Activated CD4-positive, alpha-beta memory T cell treated with anti-CD3 and anti-CD28 coated beads, Interleukin-2, amount 10 ng/mL, durations not matched to agents 7 days and 5 days (primary cell): ENCODE measurements at regions of chr20 and their contacts with region 1.

Region 1: GRCh38 chr20:5119435-5120188 is at the start of gene PCNA:
- DNase-seq: peak; percentile 98
- H3K4me3 Mint-ChIP-seq: peak within 1 kb of the TSS; percentile 86
- H3K27ac Mint-ChIP-seq: peak within 1 kb of the TSS; percentile 90
- H3K4me1 Mint-ChIP-seq: peaks cover 69% of the 10 kb centered on the region
- H3K27me3 Mint-ChIP-seq: no peaks in the 10 kb centered on the region
- total RNA-seq, gene PCNA: 413 to 415 TPM

Region 2: DNA sequence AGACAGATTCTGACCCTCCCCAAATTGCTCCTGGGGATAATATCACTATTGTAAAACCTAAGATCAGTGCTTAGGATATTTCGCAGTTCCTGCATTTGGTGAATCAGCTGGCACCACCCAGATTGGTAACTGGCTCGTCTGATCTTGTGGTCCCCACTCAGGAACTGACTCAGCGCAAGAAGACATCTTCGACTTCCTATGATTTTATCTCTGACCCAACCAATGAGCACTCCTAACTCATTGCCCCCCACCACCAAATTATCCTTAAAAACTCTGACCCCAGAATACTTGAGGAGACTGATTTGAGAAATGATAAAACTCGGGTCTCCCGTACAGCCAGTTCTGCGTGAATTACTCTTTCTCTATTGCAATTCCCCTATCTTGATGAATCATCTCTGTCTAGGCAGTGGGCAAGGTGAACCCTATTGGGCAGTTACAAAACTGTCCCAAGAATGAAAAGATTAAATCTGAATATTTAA is 453.6 kb before region 1 on chr20:
- CTCF ChIA-PET with region 1: no interaction called
- POLR2A ChIA-PET with region 1: interaction called, 10 read pairs
- DNase-seq: peak; percentile 81
- H3K4me3 Mint-ChIP-seq: peak overlapping the region; percentile 57
- H3K27ac Mint-ChIP-seq: peak overlapping the region; percentile 95
- H3K4me1 Mint-ChIP-seq: peaks cover 69% of the 10 kb centered on the region
- H3K27me3 Mint-ChIP-seq: no peaks in the 10 kb centered on the region

Region 3: GRCh38 chr20:4925842-4926530 is 193.6 kb before region 1 on chr20:
- CTCF ChIA-PET with region 1: no interaction called
- POLR2A ChIA-PET with region 1: no interaction called
- DNase-seq: no peak
- H3K4me3 Mint-ChIP-seq: no peak overlapping the region
- H3K27ac Mint-ChIP-seq: no peak overlapping the region
- H3K4me1 Mint-ChIP-seq: peaks cover 16% of the 10 kb centered on the region
- H3K27me3 Mint-ChIP-seq: no peaks in the 10 kb centered on the region

Region 4: GRCh38 chr20:4937397-4938319 is 182.0 kb before region 1 on chr20:
- CTCF ChIA-PET with region 1: no interaction called
- POLR2A ChIA-PET with region 1: no interaction called
- DNase-seq: no peak
- H3K4me3 Mint-ChIP-seq: no peak overlapping the region
- H3K27ac Mint-ChIP-seq: no peak overlapping the region
- H3K4me1 Mint-ChIP-seq: peaks cover 3% of the 10 kb centered on the region
- H3K27me3 Mint-ChIP-seq: no peaks in the 10 kb centered on the region

Region 5: GRCh38 chr20:5001174-5002076 is 118.2 kb before region 1 on chr20 and contains the start of gene SLC23A2:
- CTCF ChIA-PET with region 1: no interaction called
- POLR2A ChIA-PET with region 1: interaction called, 10 read pairs
- DNase-seq: peak; percentile 64
- H3K4me3 Mint-ChIP-seq: peak within 1 kb of the TSS; percentile 93
- H3K27ac Mint-ChIP-seq: peak within 1 kb of the TSS; percentile 76
- H3K4me1 Mint-ChIP-seq: peaks cover 26% of the 10 kb centered on the region
- H3K27me3 Mint-ChIP-seq: peaks cover 12% of the 10 kb centered on the region
- total RNA-seq, gene SLC23A2: 12.9 to 14.1 TPM

Region 6: GRCh38 chr20:5033571-5033970 is 86.0 kb before region 1 on chr20:
- CTCF ChIA-PET with region 1: no interaction called
- POLR2A ChIA-PET with region 1: no interaction called
- DNase-seq: no peak
- H3K4me3 Mint-ChIP-seq: no peak overlapping the region
- H3K27ac Mint-ChIP-seq: no peak overlapping the region
- H3K4me1 Mint-ChIP-seq: peaks cover 4% of the 10 kb centered on the region
- H3K27me3 Mint-ChIP-seq: peaks cover 2% of the 10 kb centered on the region

Region 7: DNA sequence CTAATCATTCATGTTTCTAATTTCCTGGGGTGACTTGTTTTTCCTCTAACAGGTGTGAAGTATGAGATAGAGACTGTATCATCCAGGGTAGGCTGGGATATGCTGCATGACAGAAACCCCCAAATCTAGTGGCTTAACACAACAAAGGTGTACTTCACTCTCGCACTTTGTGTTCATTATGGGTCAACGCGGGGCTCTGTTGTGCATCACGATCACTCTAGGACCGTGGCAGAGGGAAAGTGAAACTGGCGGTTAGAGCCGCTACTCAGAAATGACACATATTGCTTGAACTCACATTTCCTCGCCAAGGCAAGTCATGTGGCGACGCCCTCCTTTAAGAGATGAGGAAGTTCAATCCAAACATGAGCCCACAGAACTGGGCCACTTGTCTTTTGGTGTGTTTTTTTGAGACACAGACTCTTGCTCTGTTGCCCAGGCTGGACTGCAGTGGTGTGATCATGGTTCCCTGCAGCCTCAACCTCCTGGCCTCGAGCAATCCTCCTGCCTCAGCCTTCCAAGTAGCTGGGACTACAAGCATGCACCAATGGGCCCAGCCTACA is 41.1 kb before region 1 on chr20:
- CTCF ChIA-PET with region 1: no interaction called
- POLR2A ChIA-PET with region 1: interaction called, 35 read pairs
- DNase-seq: peak; percentile 90
- H3K4me3 Mint-ChIP-seq: peak overlapping the region; percentile 68
- H3K27ac Mint-ChIP-seq: peak overlapping the region; percentile 97
- H3K4me1 Mint-ChIP-seq: peaks cover 54% of the 10 kb centered on the region
- H3K27me3 Mint-ChIP-seq: no peaks in the 10 kb centered on the region

Region 8: DNA sequence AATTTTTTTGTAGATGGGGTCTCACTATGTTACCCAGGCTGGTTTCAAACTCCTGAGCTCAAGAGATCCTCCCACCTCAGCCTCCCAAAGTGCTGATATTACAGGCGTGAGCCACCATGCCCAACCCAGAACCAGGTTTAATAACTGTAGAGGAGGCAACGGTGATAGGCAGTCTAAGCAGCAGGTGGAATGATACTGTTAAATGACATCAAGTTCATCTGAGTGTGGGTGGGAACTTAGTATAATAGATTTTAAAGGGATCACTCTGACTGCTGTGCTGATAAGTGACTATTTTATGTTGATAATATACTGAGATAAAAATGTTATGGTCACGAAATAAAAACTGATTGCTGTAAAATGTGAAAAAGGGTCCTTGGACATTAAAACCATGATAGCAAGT is 30.9 kb before region 1 on chr20:
- CTCF ChIA-PET with region 1: no interaction called
- POLR2A ChIA-PET with region 1: no interaction called
- DNase-seq: no peak
- H3K4me3 Mint-ChIP-seq: no peak overlapping the region
- H3K27ac Mint-ChIP-seq: no peak overlapping the region
- H3K4me1 Mint-ChIP-seq: peaks cover 16% of the 10 kb centered on the region
- H3K27me3 Mint-ChIP-seq: no peaks in the 10 kb centered on the region

Region 9: GRCh38 chr20:5100684-5101347 is 18.8 kb before region 1 on chr20:
- CTCF ChIA-PET with region 1: interaction called, 12 read pairs
- POLR2A ChIA-PET with region 1: interaction called, 7 read pairs
- DNase-seq: peak; percentile 77
- H3K4me3 Mint-ChIP-seq: no peak overlapping the region
- H3K27ac Mint-ChIP-seq: no peak overlapping the region
- H3K4me1 Mint-ChIP-seq: peaks cover 12% of the 10 kb centered on the region
- H3K27me3 Mint-ChIP-seq: no peaks in the 10 kb centered on the region

Region 10: GRCh38 chr20:5168651-5169396 is 49.2 kb after region 1 on chr20:
- CTCF ChIA-PET with region 1: no interaction called
- POLR2A ChIA-PET with region 1: interaction called, 10 read pairs
- DNase-seq: no peak
- H3K4me3 Mint-ChIP-seq: no peak overlapping the region
- H3K27ac Mint-ChIP-seq: peak overlapping the region; percentile 58
- H3K4me1 Mint-ChIP-seq: peaks cover 56% of the 10 kb centered on the region
- H3K27me3 Mint-ChIP-seq: no peaks in the 10 kb centered on the region

Region 11: GRCh38 chr20:5191829-5192569 is 72.4 kb after region 1 on chr20:
- CTCF ChIA-PET with region 1: interaction called, 141 read pairs
- POLR2A ChIA-PET with region 1: interaction called, 53 read pairs
- DNase-seq: peak; percentile 48
- H3K4me3 Mint-ChIP-seq: no peak overlapping the region
- H3K27ac Mint-ChIP-seq: peak overlapping the region; percentile 60
- H3K4me1 Mint-ChIP-seq: peaks cover 28% of the 10 kb centered on the region
- H3K27me3 Mint-ChIP-seq: no peaks in the 10 kb centered on the region